Thyroid gland (tissue), 4 donors: ENCODE measurements at regions of chr16 and their contacts with region 1.

Region 1: GRCh38 chr16:58032710-58033293 is 7.2 kb downstream of the MMP15 start:
- DNase-seq: peak; percentile 96 to 97
- H3K4me3 ChIP-seq: no peak overlapping the region
- H3K27ac ChIP-seq: peak overlapping the region; percentile 76 to 89 (median 88)
- H3K4me1 ChIP-seq: peaks cover 82 to 86% of the 10 kb centered on the region in 2 donors
- H3K27me3 ChIP-seq: no peaks in the 10 kb centered on the region
- CTCF ChIP-seq: no peak
- POLR2A ChIP-seq: peak in 1 of 2 donors; percentile 45

Region 2: DNA sequence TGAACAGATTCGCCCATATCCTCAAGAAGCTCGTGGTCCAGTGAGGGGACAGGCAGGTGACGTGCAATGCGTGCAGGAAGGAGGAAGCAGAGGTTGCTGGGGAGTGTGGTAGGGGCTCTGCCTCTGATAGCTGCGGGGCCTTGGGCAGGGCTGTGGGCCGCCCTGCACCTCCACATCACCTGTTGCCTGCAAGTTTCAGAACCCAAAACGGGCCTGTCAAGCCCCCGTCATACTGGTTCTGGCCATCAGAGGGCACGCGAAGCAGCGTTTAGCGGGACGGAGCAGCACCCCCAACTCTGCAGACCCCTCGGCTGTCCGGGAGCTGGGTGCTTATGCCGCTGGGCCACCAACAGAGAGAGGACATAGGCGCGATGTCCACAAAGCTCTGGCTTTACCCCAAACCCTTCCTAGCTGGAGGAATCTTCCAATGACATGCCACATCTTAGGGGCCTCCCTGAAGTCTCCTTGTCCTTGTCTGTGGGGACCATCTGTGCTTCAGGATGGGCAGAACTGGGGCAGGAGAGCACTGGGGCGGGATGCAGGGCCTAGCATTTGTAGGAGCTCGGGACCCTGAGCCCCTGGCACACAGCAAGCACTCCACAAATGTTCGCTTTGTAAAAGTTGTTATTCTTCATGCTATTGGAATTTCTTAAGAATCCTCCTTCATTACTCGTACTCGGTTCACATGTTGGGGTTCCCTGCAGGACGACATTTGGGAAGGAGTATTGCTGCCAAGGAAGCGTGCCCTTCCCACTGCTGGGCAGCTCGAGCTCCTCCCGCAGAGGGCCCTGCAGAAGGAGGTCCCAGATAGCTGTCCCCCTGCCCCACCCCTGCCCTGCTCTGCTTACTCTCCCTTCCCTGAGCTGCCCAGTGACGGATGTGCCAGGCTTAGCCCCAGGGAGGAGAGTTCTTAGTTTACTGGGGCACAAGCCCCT is 126.2 kb before region 1 on chr16:
- intact Hi-C with region 1: no loop called
- DNase-seq: peak; percentile 50 to 61
- H3K4me3 ChIP-seq: no peak overlapping the region
- H3K27ac ChIP-seq: no peak overlapping the region
- H3K4me1 ChIP-seq: peaks cover 4 to 10% of the 10 kb centered on the region in 2 donors
- H3K27me3 ChIP-seq: no peaks in the 10 kb centered on the region
- CTCF ChIP-seq: peak; percentile 19 to 78 (median 64)
- POLR2A ChIP-seq: no peak

Region 3: DNA sequence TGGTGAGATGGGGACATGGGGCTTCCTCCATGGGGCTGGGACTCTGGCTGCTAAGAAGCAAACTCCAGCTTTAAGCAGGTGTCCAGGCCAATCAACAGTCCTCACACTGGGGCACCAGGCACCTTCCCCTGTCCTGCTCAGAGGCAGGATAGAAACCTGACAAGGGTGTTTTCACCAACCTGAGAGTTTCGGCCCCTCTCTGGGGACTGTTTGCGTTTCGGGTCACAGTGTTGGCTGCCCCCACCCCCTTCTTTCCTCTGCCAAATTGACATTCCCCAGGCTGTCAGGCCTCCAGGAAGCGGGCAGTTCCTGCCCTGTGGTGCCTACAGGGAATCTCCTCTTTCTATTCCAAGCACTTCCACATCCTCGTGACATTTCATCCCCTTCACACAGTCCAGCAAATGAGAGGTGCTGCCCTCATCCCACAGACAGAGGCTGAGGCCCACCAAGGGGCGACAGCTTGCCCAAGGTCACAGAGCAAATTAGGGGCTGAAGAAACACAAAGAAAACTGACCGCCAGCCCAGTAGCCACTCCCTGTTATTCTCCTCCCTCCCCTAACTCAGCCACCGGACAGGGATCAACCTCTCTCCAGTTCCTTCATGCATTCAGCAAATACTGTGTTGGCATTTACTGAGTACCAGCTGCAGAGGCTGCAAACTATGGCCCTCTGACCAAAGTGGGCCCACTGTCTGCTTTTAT is 30.7 kb after region 1 on chr16:
- intact Hi-C with region 1: loop called (anchors 5 kb)
- DNase-seq: peak; percentile 80 to 83
- H3K4me3 ChIP-seq: no peak overlapping the region
- H3K27ac ChIP-seq: peak overlapping the region; percentile 92 to 95 (median 93)
- H3K4me1 ChIP-seq: peaks cover 26 to 45% of the 10 kb centered on the region in 2 donors
- H3K27me3 ChIP-seq: no peaks in the 10 kb centered on the region
- CTCF ChIP-seq: no peak
- POLR2A ChIP-seq: peak in 1 of 2 donors; percentile 32

Region 4: GRCh38 chr16:58699151-58699550 is 666.3 kb after region 1 on chr16:
- intact Hi-C with region 1: no loop called
- DNase-seq: no peak
- H3K4me3 ChIP-seq: no peak overlapping the region
- H3K27ac ChIP-seq: no peak overlapping the region
- H3K4me1 ChIP-seq: no peaks in the 10 kb centered on the region
- H3K27me3 ChIP-seq: no peaks in the 10 kb centered on the region
- CTCF ChIP-seq: no peak
- POLR2A ChIP-seq: no peak